MCF 10A (cell line): ENCODE measurements at regions of chr14 and their contacts with region 1.

Region 1: DNA sequence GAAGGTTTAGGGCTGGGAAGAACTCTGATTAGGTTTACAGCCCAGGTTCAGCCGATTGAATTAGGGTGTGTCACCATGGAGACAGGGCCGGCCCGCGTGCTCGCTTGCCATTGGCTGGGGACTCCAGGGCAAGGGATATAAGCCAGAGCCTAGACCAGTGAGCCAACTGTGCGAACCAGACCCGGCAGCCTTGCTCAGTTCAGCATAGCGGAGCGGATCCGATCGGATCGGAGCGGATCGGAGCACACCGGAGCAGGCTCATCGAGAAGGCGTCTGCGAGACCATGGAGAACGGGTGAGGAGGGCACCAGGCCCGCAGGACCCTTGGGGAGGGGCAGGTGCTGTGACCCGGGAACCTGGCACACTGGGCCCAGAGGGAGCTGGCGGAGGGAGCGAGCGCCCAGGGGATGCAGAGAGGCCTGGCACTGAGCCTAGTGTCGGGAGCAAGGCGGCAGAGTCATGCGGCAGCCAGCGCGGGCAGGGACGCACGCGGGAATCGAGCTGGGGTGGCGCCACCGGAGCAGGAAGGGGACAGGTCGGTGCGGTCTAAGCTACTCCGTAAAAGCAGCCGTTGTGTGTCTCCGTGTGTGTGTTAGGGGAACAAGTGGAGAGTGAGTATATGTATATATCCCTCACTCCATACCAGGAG is at the start of gene PNP:
- DNase-seq: peak; percentile 91
- H3K4me3 Mint-ChIP-seq: peak within 1 kb of the TSS; percentile 93
- H3K27ac Mint-ChIP-seq: peak within 1 kb of the TSS; percentile 95
- H3K4me1 Mint-ChIP-seq: peaks cover 33% of the 10 kb centered on the region
- H3K27me3 Mint-ChIP-seq: no peaks in the 10 kb centered on the region
- CTCF ChIP-seq: no peak
- total RNA-seq, gene PNP: 56.0 and 63.9 TPM in 2 replicates

Region 2: GRCh38 chr14:20332788-20333493 is 136.4 kb before region 1 on chr14 and contains the start of gene CCNB1IP1:
- CTCF ChIA-PET with region 1: interaction called, 9 read pairs
- POLR2A ChIA-PET with region 1: interaction called, 15 read pairs
- intact Hi-C with region 1: no loop called
- DNase-seq: peak; percentile 94
- H3K4me3 Mint-ChIP-seq: peak within 1 kb of the TSS; percentile 93
- H3K27ac Mint-ChIP-seq: peak within 1 kb of the TSS; percentile 94
- H3K4me1 Mint-ChIP-seq: peaks cover 25% of the 10 kb centered on the region
- H3K27me3 Mint-ChIP-seq: no peaks in the 10 kb centered on the region
- CTCF ChIP-seq: no peak
- total RNA-seq, gene CCNB1IP1: 105 and 108 TPM in 2 replicates

Region 3: DNA sequence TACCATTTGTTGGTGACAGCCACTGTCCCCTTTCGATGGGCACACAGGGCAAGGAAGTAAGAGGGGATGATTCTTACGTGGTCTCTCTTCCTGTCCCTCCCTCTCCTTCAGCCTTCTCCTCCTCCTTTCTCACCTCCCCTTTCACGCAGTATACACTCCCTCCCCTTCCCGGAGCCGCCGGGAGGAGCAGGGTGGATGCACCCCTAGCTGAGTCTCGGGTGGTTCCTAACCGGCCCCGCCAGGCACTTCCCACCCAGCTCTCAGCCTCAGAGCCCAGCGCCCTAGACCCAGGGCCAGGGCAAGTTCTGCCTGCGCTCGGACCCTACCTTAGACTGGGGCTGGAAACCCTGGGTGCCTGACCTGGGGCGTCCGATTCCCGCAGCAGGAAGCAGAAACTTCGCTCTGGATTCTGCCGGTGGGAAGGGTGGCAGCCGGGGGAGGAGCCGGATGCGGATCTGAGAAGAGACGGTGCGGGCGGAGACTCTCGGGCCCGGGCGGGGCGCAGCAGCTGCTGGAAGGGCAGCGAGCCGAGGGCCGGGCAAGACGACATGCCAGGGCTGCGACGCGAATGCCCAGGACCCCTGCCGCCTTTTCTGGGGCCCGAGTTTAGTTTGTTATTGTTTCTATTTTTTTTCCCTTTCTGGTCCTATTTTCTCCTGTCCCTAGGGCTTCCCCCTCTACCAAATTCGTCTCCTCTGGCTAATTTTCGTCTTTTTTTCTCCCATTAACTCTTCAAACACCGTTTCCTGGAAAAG is 56.1 kb before region 1 on chr14 and contains the start of gene TEP1:
- CTCF ChIA-PET with region 1: interaction called, 9 read pairs
- POLR2A ChIA-PET with region 1: interaction called, 31 read pairs
- intact Hi-C with region 1: loop called (anchors 1 kb)
- DNase-seq: peak; percentile 87
- H3K4me3 Mint-ChIP-seq: peak within 1 kb of the TSS; percentile 77
- H3K27ac Mint-ChIP-seq: peak within 1 kb of the TSS; percentile 49
- H3K4me1 Mint-ChIP-seq: peaks cover 7% of the 10 kb centered on the region
- H3K27me3 Mint-ChIP-seq: no peaks in the 10 kb centered on the region
- CTCF ChIP-seq: no peak
- total RNA-seq, gene TEP1: 20.4 and 22.7 TPM in 2 replicates

Region 4: DNA sequence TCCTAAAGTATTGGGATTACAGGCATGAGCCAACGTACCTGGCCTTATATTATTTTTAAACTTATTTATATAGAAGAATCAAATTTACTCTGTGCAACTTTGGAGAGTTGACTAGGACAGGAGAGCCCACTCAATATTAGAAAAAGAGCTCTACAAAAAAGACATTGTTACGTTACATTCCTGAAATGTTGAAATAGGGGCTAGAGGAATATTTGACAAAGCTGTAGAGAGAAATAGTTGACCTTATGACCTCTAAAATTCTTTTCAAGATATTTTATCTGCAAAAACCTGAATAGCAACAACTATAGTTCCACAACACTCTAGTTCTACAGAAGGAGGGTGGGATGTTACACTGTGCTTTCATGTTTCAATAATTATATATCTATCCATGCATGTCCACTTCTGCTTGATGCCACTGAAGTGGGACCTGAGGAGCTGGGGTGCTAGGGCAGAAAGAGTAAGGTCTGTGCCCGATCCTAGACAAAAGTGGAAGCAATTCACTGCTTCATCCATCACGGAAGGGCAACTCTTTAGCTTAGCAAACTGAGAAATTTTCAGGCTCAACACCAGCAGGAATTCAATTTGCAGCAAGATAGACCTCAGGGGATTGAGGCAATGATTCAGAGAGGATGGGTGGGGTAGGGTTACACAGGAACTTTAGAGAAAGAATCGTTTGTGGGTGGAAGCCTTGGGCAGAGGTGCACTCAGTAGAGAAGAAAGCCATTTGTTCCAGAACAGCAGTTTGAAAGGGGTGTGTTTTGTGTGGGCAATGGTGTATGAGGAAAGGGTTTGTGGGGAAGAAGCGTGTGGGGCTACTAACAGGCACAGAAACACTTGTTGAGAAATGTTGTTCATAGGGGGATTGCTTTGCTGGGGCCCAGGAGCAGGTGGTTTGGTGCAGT is 20.0 kb after region 1 on chr14:
- CTCF ChIA-PET with region 1: interaction called, 3 read pairs
- POLR2A ChIA-PET with region 1: interaction called, 30 read pairs
- intact Hi-C with region 1: no loop called
- DNase-seq: peak; percentile 53
- H3K4me3 Mint-ChIP-seq: no peak overlapping the region
- H3K27ac Mint-ChIP-seq: peak overlapping the region; percentile 1
- H3K4me1 Mint-ChIP-seq: peaks cover 26% of the 10 kb centered on the region
- H3K27me3 Mint-ChIP-seq: no peaks in the 10 kb centered on the region
- CTCF ChIP-seq: no peak

Region 5: DNA sequence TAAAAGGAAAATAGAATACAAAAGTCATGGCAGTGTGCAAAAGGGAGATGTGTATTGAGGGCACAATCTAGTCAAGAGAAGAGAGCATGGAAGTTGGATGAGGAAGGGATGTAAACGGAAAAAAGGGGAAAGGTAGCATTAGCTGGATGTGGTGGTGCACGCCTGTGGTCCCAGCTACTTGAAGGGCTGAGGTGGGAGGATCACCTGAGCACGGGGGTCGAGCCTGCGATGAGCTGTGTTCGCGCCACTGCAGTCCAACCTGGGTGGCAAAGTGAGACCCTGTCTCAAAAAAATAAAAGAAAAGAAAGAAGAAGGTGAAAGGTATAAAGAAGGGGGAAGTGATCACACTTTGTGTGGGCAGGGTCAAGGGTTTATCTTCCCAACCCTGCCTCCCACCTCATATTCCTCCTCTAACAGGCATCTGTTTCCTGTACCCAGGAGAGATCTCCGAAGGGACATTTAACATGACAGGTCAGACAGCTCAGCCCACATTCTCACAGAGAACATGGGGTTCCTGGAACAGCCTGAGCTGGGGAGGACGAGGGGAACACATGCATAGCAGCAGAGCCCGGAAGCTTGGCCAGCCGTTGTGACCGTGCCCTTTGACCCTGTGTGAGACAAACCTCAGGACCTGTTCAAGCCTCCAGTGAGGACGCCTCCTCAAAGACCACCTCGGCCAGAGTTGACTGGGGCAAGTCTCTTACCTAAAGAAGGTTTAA is 109.6 kb after region 1 on chr14:
- CTCF ChIA-PET with region 1: no interaction called
- POLR2A ChIA-PET with region 1: no interaction called
- intact Hi-C with region 1: no loop called
- DNase-seq: no peak
- H3K4me3 Mint-ChIP-seq: no peak overlapping the region
- H3K27ac Mint-ChIP-seq: no peak overlapping the region
- H3K4me1 Mint-ChIP-seq: no peaks in the 10 kb centered on the region
- H3K27me3 Mint-ChIP-seq: no peaks in the 10 kb centered on the region
- CTCF ChIP-seq: no peak

Region 6: GRCh38 chr14:20606190-20606901 is 137.0 kb after region 1 on chr14:
- CTCF ChIA-PET with region 1: interaction called, 3 read pairs
- POLR2A ChIA-PET with region 1: interaction called, 3 read pairs
- intact Hi-C with region 1: loop called (anchors 1 kb)
- DNase-seq: peak; percentile 60
- H3K4me3 Mint-ChIP-seq: no peak overlapping the region
- H3K27ac Mint-ChIP-seq: no peak overlapping the region
- H3K4me1 Mint-ChIP-seq: peaks cover 9% of the 10 kb centered on the region
- H3K27me3 Mint-ChIP-seq: no peaks in the 10 kb centered on the region
- CTCF ChIP-seq: peak; percentile 54